HEK293 (cell line): ENCODE measurements at regions of chr6 and their contacts with region 1.

Region 1: GRCh38 chr6:126361832-126362412 is 22.0 kb downstream of the CENPW start:
- H3K4me3 ChIP-seq: no peak overlapping the region
- H3K27ac ChIP-seq: no peak overlapping the region
- H3K4me1 ChIP-seq: no peaks in the 10 kb centered on the region
- CTCF ChIP-seq: no peak

Region 2: DNA sequence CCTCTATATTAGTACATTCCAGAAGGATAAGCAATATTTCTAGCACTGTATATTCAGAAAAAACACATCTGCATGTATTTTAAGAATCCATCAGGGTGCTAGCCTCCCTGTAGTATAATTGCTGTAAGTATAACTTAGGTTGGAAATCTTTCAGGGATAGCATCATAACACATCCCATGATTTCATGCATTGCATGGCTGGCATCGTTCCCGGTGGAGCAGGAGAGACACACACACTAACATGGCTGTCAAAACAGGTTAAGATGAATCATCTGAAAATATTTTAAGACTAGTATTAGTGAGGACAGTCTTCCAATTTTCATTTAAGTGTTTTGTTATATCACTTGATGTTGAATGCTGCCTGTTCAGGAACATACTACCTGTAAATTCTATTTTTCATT is 54.1 kb before region 1 on chr6:
- CTCF ChIA-PET with region 1: no interaction called
- POLR2A ChIA-PET with region 1: no interaction called
- H3K4me3 ChIP-seq: no peak overlapping the region
- H3K27ac ChIP-seq: no peak overlapping the region
- H3K4me1 ChIP-seq: no peaks in the 10 kb centered on the region
- CTCF ChIP-seq: no peak

Region 3: DNA sequence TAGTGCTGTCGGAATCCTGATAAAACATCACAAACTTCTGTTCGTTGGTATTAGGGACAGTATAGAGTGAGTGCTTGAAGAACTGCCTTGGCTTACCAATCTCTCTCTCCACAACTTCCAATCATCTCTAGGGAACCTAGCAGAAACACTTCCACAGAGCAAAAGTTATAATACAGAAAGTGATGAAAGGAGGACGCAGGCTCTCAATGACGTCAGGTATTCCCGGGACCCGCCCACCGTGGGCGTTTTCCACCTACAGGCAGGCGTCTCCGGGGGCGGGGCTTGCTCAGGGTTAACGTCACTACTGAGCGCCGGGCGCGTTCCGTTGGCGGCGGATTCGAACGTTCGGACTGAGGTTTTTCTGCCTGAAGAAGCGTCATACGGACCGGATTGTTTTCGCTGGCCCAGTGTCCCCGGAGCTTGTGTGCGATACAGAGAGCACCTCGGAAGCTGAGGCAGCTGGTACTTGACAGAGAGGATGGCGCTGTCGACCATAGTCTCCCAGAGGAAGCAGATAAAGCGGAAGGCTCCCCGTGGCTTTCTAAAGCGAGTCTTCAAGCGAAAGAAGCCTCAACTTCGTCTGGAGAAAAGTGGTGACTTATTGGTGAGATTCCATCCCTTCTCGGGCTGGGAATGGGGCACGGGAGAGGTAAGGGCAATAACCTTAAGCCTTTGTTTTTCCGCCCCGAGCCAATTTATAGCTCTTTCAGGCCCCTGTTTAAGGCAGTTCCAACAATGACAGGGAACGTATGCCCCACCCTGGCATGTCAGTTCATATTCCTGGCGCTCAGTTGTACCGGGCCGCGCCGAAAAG is 21.9 kb before region 1 on chr6 and contains the start of gene CENPW:
- CTCF ChIA-PET with region 1: interaction called, 14 read pairs
- POLR2A ChIA-PET with region 1: interaction called, 3 read pairs
- H3K4me3 ChIP-seq: peak within 1 kb of the TSS; percentile 77
- H3K27ac ChIP-seq: peak within 1 kb of the TSS; percentile 59
- H3K4me1 ChIP-seq: peaks cover 12% of the 10 kb centered on the region; the same call in 1 of the 2 replicates
- CTCF ChIP-seq: no peak

Region 4: GRCh38 chr6:126374372-126374771 is 12.4 kb after region 1 on chr6:
- CTCF ChIA-PET with region 1: interaction called, 12 read pairs
- POLR2A ChIA-PET with region 1: no interaction called
- H3K4me3 ChIP-seq: no peak overlapping the region
- H3K27ac ChIP-seq: no peak overlapping the region
- H3K4me1 ChIP-seq: no peaks in the 10 kb centered on the region
- CTCF ChIP-seq: no peak

Region 5: GRCh38 chr6:126427713-126428112 is 65.8 kb after region 1 on chr6:
- CTCF ChIA-PET with region 1: no interaction called
- POLR2A ChIA-PET with region 1: no interaction called
- H3K4me3 ChIP-seq: no peak overlapping the region
- H3K27ac ChIP-seq: no peak overlapping the region
- H3K4me1 ChIP-seq: no peaks in the 10 kb centered on the region
- CTCF ChIP-seq: no peak

Region 6: DNA sequence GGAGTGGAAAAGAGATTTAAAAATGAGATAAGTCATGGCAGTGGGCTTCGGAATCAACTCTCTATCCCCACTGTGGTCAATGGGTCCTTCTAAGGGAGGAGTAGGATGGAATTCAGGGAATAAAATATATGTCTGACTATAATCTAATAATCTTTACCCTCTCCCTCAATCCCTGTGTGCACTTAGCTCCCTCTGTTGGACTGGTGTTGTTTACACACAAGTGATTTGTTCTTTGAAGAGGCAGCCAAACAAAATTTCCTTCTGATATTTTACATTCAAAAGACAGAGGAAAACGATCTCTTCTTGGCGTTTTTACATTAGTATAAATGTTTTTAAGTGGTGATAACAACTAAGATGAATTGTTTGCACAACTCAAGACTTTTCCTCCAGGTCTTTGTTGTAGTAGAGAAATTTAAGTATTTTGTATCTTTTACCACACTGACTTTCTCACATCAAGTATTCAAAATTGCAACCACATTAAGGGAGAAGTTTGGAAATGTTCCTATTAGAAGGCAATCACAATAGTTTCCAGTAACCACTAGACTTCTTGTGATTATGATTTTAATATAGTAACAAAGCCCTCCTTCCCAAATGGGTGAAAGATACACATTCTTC is 295.7 kb after region 1 on chr6:
- CTCF ChIA-PET with region 1: interaction called, 20 read pairs
- POLR2A ChIA-PET with region 1: no interaction called
- H3K4me3 ChIP-seq: no peak overlapping the region
- H3K27ac ChIP-seq: no peak overlapping the region
- H3K4me1 ChIP-seq: no peaks in the 10 kb centered on the region
- CTCF ChIP-seq: peak; percentile 39; the same call in 1 of the 2 replicates

Region 7: GRCh38 chr6:127120787-127121636 is 759.1 kb after region 1 on chr6:
- CTCF ChIA-PET with region 1: interaction called, 16 read pairs
- POLR2A ChIA-PET with region 1: no interaction called
- H3K4me3 ChIP-seq: no peak overlapping the region
- H3K27ac ChIP-seq: no peak overlapping the region
- H3K4me1 ChIP-seq: no peaks in the 10 kb centered on the region
- CTCF ChIP-seq: peak; percentile 91

Region 8: GRCh38 chr6:127186889-127187288 is 825.0 kb after region 1 on chr6:
- CTCF ChIA-PET with region 1: interaction called, 12 read pairs
- POLR2A ChIA-PET with region 1: no interaction called
- H3K4me3 ChIP-seq: no peak overlapping the region
- H3K27ac ChIP-seq: no peak overlapping the region
- H3K4me1 ChIP-seq: no peaks in the 10 kb centered on the region
- CTCF ChIP-seq: 0 out of 2 replicates have a peak, but pooled peaks have one; percentile 30